Common myeloid progenitor, CD34-positive (primary cell): ENCODE measurements at regions of chr15 and their contacts with region 1.

Region 1: DNA sequence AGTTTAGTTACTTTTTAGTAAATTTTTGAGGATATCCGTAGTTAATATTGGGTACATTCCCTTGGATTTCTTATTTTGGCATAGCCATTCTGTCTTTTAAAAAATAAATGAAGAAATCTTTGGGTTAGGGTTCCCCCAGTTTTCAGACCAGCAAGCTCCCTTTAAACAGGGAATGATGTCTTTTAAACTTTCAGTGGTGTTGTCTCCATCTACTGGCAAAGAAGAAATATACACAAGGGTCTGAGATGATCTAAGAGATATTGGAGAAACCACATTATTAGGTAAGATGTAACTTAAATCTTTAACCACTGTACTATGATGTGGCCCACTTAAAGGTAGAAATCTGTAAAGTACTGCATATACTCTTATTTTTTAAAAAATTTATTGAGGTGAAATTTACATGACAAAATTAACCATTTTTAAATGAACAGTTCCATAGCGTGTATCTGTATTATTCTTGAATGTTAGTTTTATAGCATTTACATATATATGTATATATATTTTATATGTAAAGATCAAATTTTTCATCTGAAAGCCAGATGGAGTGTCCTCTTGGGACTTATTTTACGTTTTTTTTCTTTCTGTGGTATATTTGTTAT is 35.1 kb upstream of the EIF3J start:
- DNase-seq: peak; percentile 45 to 65 (median 61)
- H3K4me3 ChIP-seq: no peak overlapping the region
- H3K27ac ChIP-seq: no peak overlapping the region
- H3K4me1 ChIP-seq: no peaks in the 10 kb centered on the region
- H3K27me3 ChIP-seq: no peaks in the 10 kb centered on the region

Region 2: GRCh38 chr15:44485880-44486279 is 16.0 kb before region 1 on chr15:
- CTCF ChIA-PET with region 1: interaction called, 10 read pairs
- POLR2A ChIA-PET with region 1: no interaction called
- DNase-seq: no peak
- H3K4me3 ChIP-seq: no peak overlapping the region
- H3K27ac ChIP-seq: peak overlapping the region in 1 of 2 experiments; percentile 14
- H3K4me1 ChIP-seq: no peaks in the 10 kb centered on the region
- H3K27me3 ChIP-seq: no peaks in the 10 kb centered on the region

Region 3: GRCh38 chr15:44606740-44607139 is 104.9 kb after region 1 on chr15:
- CTCF ChIA-PET with region 1: no interaction called
- POLR2A ChIA-PET with region 1: no interaction called
- DNase-seq: no peak
- H3K4me3 ChIP-seq: no peak overlapping the region
- H3K27ac ChIP-seq: no peak overlapping the region
- H3K4me1 ChIP-seq: no peaks in the 10 kb centered on the region
- H3K27me3 ChIP-seq: no peaks in the 10 kb centered on the region

Region 4: DNA sequence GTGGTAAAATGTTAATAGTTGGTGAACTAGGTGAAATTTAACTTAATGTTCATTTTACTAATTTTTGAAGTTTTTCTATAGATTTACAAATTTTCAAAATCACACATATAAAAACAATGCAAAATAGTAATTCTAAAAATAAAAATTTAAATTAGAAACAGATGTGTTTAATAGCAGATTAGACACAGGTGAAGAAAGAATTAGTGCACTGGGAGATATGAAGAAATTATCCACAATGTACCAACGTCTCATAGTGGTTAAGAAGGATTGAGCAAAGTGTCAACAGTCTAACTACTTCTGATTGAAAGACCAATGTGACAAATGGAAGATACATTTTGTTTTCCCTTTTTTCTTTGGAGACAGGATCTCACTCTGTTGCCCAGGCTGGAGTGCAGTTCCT is 135.1 kb after region 1 on chr15:
- CTCF ChIA-PET with region 1: no interaction called
- POLR2A ChIA-PET with region 1: no interaction called
- DNase-seq: peak in 2 of 3 donors; percentile 5 to 15
- H3K4me3 ChIP-seq: no peak overlapping the region
- H3K27ac ChIP-seq: no peak overlapping the region
- H3K4me1 ChIP-seq: no peaks in the 10 kb centered on the region
- H3K27me3 ChIP-seq: no peaks in the 10 kb centered on the region